IMR-90 (cell line): ENCODE measurements at regions of chr2 and their contacts with region 1.

Region 1: DNA sequence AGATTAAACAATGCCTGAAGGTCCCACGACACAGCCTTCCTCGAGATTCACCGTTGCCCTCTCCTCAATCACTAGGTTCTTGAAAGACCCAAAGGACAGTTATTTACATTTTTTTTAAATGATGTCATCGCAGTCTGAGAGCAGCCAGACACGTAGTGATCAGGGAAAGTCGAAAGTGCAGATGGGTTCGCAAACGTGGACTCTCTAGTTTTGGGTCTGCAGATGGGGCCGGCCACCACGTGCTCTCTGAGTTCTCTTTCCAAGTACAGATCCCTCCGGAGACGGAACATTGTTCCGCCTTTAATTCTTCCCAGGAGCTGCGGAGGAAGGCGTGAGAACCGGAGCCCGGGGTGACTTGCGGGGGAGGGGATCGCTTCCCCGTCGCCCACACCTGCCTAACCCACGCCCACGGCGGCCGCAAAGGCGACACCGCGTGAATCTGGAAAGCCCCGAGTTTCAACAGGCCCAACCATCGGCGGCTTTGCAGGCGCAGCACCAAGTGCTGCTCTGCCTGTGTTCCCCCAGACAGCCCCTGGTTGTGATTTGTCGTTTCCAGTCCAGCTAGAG is 54.3 kb downstream of the PKDCC start:
- DNase-seq: peak; percentile 93
- ATAC-seq: peak; percentile 58
- H3K4me3 ChIP-seq: no peak overlapping the region; the same call in 1 of the 2 replicates
- H3K27ac ChIP-seq: peak overlapping the region; percentile 78
- H3K4me1 ChIP-seq: peaks cover 21% of the 10 kb centered on the region
- H3K27me3 ChIP-seq: 0 out of 2 replicates have a peak, but pooled peaks cover 2% of the 10 kb centered on the region
- CTCF ChIP-seq: no peak
- POLR2A ChIP-seq: 0 out of 2 replicates have a peak, but pooled peaks have one; percentile 50
- RAD21 ChIP-seq: no peak

Region 2: GRCh38 chr2:42132966-42133641 is 31.0 kb after region 1 on chr2:
- CTCF ChIA-PET with region 1: no interaction called
- POLR2A ChIA-PET with region 1: no interaction called
- dilution Hi-C with region 1: no loop called
- in situ Hi-C with region 1: no loop called
- intact Hi-C with region 1: loop called (anchors 2 kb)
- DNase-seq: peak; percentile 98
- ATAC-seq: peak; percentile 83
- H3K4me3 ChIP-seq: peak overlapping the region; percentile 0; the same call in 1 of the 2 replicates
- H3K27ac ChIP-seq: peak overlapping the region; percentile 71
- H3K4me1 ChIP-seq: peaks cover 33% of the 10 kb centered on the region
- H3K27me3 ChIP-seq: no peaks in the 10 kb centered on the region
- CTCF ChIP-seq: no peak
- POLR2A ChIP-seq: peak; percentile 52; the same call in 1 of the 2 replicates
- RAD21 ChIP-seq: 0 out of 2 replicates have a peak, but pooled peaks have one; percentile 2

Region 3: DNA sequence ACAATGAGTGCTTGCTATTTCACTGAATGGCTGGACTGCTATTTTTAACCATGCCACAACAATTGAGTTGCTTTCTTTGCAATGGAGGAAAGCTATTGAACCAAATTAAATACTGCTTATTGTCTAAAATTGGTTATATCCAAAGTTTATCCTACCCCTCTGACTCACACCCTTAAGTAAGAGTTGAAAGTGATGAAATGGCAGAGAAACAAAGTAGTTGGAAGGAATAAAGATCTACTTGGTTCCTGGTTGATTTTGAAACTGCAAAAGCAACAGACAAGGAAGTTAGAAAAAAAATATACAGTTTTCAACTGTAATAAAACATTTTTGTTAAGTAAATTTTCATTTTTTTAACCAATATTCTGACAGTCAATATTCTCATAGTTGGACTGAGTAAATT is 114.6 kb after region 1 on chr2:
- CTCF ChIA-PET with region 1: no interaction called
- POLR2A ChIA-PET with region 1: no interaction called
- dilution Hi-C with region 1: no loop called
- in situ Hi-C with region 1: no loop called
- intact Hi-C with region 1: no loop called
- DNase-seq: peak; percentile 82
- ATAC-seq: peak; percentile 64
- H3K4me3 ChIP-seq: no peak overlapping the region
- H3K27ac ChIP-seq: no peak overlapping the region
- H3K4me1 ChIP-seq: peaks cover 10% of the 10 kb centered on the region
- H3K27me3 ChIP-seq: no peaks in the 10 kb centered on the region
- CTCF ChIP-seq: no peak
- POLR2A ChIP-seq: no peak
- RAD21 ChIP-seq: no peak